ENCODE measurements at regions of chr1 and their contacts with region 1.

Region 1: GRCh38 chr1:179025125-179025974 is at the start of gene FAM20B:
- DNase-seq: peak; percentile 85 to 90 (median 88)
- H3K4me3 ChIP-seq: peak within 1 kb of the TSS; percentile 61 to 77
- H3K4me3 Mint-ChIP-seq: peak within 1 kb of the TSS; percentile 88 to 94 (median 90)
- H3K27ac ChIP-seq: peak within 1 kb of the TSS; percentile 77
- H3K27ac Mint-ChIP-seq: peak within 1 kb of the TSS; percentile 85 to 95 (median 90)
- H3K4me1 ChIP-seq: peaks cover 37% of the 10 kb centered on the region
- H3K4me1 Mint-ChIP-seq: peaks cover 29 to 49% (median 39%) of the 10 kb centered on the region in 4 donors
- H3K27me3 ChIP-seq: no peaks in the 10 kb centered on the region
- H3K27me3 Mint-ChIP-seq: no peaks in the 10 kb centered on the region
- total RNA-seq, gene FAM20B: 29.6 to 31.9 TPM

Region 2: DNA sequence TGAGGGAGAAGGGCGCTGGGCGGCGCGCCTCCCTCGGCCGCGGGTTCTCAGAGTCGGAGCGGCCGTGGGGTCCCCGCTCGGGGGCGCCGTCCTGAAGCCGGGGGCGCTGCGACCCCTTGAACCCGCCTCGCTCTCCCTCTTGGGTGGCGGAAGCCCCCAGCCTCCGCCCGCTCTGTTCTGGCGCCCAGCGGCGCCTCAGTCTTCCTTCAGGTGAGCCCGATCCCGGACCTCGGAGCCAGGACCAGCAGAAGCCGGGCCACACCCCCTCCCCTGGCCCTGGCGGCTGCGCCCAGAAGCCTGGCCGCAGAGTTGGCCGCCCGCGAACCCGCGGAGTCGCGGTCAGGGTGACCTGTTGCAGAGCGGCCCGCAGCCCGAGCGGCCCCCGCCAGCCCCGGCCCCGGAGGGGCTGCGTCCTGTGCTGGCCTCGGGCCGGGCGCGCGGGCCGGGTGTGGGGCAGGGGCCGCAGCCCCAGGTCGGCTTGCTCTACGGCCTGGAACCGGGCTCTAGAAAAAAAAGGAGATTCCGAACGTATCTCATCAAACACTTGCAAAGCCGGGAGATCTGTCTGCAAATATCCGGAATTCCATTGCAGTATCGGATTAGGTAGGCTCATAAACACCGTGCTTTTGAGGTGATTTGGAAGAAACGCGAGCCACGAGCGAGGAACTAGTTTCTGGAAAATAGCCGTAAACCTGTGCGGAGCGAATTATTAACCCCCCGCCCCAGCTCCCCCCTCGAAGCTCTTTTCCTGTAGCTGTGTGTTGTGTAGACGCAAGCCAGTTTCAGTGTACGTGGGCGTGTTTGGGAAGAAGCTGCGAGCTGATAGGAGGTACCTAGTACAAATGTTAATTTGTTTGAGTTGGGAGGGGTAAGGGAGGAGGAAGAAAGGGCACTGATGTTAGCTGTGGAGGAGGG is 299.5 kb before region 1 on chr1:
- CTCF ChIA-PET with region 1: no interaction called
- POLR2A ChIA-PET with region 1: no interaction called
- intact Hi-C with region 1: loop called (anchors 2 kb)
- DNase-seq: peak; percentile 48 to 79 (median 64)
- H3K4me3 ChIP-seq: peak overlapping the region; percentile 45 to 63
- H3K4me3 Mint-ChIP-seq: peak overlapping the region; percentile 74 to 92 (median 86)
- H3K27ac ChIP-seq: peak overlapping the region; percentile 47
- H3K27ac Mint-ChIP-seq: peak overlapping the region; percentile 75 to 91 (median 87)
- H3K4me1 ChIP-seq: peaks cover 14% of the 10 kb centered on the region
- H3K4me1 Mint-ChIP-seq: peaks cover 13 to 27% (median 16%) of the 10 kb centered on the region in 4 donors
- H3K27me3 ChIP-seq: no peaks in the 10 kb centered on the region
- H3K27me3 Mint-ChIP-seq: peaks cover 3 to 9% of the 10 kb centered on the region in 2 donors

Region 3: DNA sequence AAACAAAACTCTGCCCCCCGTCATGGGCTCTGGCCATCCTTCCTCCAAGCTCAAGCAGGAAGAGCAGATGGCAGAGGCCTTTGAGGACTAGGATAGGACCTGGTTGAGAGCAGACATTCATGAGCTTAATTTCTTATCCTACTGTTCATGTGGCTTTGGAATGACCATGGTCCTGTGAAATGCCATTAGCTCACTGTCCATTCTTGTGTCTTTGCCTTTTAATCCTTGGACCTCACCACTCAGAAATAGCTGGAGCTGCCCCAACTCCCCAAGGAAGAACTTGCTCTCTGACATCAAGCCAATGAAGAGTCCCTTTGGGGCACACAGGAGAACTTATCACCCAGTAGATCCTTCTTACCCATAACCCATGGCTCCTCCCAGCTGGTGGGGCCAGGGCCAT is 11.2 kb before region 1 on chr1:
- CTCF ChIA-PET with region 1: no interaction called
- POLR2A ChIA-PET with region 1: no interaction called
- intact Hi-C with region 1: no loop called
- DNase-seq: no peak
- H3K4me3 ChIP-seq: no peak overlapping the region
- H3K4me3 Mint-ChIP-seq: no peak overlapping the region
- H3K27ac ChIP-seq: no peak overlapping the region
- H3K27ac Mint-ChIP-seq: no peak overlapping the region
- H3K4me1 ChIP-seq: peaks cover 4% of the 10 kb centered on the region
- H3K4me1 Mint-ChIP-seq: peaks cover 4 to 9% (median 6%) of the 10 kb centered on the region in 4 donors
- H3K27me3 ChIP-seq: no peaks in the 10 kb centered on the region
- H3K27me3 Mint-ChIP-seq: peaks cover 0 to 1% of the 10 kb centered on the region in 2 donors

Region 4: DNA sequence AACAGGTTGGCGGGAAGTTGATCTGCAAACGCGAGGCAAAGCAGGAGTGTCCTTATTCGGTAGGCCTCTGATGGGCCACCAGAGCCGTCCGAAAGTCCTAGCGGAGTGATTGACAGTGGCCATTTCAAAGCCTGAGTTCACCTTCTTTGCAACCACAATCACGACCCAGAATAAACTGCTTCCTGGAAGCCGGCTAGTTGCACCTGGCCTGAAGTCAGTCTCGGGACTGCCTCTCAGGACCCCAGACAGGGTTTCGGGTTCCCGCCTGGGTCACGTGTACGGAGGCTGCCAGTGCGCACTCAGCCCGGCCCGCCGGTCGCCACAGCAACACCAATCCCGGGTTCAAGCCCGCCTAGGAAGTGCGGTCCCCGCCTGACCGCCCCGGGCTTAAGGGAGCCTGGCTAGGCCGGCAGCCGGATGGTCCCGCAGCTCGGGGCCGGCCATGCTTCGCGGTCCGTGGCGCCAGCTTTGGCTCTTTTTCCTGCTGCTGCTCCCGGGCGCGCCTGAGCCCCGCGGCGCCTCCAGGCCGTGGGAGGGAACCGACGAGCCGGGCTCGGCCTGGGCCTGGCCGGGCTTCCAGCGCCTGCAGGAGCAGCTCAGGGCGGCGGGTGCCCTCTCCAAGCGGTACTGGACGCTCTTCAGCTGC is 56.5 kb after region 1 on chr1 and contains the start of gene TOR3A:
- CTCF ChIA-PET with region 1: interaction called, 6 read pairs
- POLR2A ChIA-PET with region 1: interaction called, 6 read pairs
- intact Hi-C with region 1: loop called (anchors 2 kb)
- DNase-seq: peak; percentile 72 to 80 (median 75)
- H3K4me3 ChIP-seq: peak within 1 kb of the TSS; percentile 57 to 74
- H3K4me3 Mint-ChIP-seq: peak within 1 kb of the TSS; percentile 93 to 98 (median 96)
- H3K27ac ChIP-seq: peak within 1 kb of the TSS; percentile 81
- H3K27ac Mint-ChIP-seq: peak within 1 kb of the TSS; percentile 97 to 98 (median 97)
- H3K4me1 ChIP-seq: peaks cover 23% of the 10 kb centered on the region
- H3K4me1 Mint-ChIP-seq: peaks cover 15 to 37% (median 26%) of the 10 kb centered on the region in 4 donors
- H3K27me3 ChIP-seq: no peaks in the 10 kb centered on the region
- H3K27me3 Mint-ChIP-seq: no peaks in the 10 kb centered on the region
- total RNA-seq, gene TOR3A: 25.4 to 27.3 TPM

Region 5: GRCh38 chr1:179121159-179121938 is 96.0 kb after region 1 on chr1:
- CTCF ChIA-PET with region 1: no interaction called
- POLR2A ChIA-PET with region 1: no interaction called
- intact Hi-C with region 1: no loop called
- DNase-seq: peak; percentile 38 to 47 (median 45)
- H3K4me3 ChIP-seq: no peak overlapping the region
- H3K4me3 Mint-ChIP-seq: peak overlapping the region in 1 of 8 donors; percentile 48
- H3K27ac ChIP-seq: no peak overlapping the region
- H3K27ac Mint-ChIP-seq: peak overlapping the region in 1 of 7 donors; percentile 30
- H3K4me1 ChIP-seq: no peaks in the 10 kb centered on the region
- H3K4me1 Mint-ChIP-seq: peaks cover 0 to 7% (median 0%) of the 10 kb centered on the region in 4 donors
- H3K27me3 ChIP-seq: no peaks in the 10 kb centered on the region
- H3K27me3 Mint-ChIP-seq: no peaks in the 10 kb centered on the region

Region 6: DNA sequence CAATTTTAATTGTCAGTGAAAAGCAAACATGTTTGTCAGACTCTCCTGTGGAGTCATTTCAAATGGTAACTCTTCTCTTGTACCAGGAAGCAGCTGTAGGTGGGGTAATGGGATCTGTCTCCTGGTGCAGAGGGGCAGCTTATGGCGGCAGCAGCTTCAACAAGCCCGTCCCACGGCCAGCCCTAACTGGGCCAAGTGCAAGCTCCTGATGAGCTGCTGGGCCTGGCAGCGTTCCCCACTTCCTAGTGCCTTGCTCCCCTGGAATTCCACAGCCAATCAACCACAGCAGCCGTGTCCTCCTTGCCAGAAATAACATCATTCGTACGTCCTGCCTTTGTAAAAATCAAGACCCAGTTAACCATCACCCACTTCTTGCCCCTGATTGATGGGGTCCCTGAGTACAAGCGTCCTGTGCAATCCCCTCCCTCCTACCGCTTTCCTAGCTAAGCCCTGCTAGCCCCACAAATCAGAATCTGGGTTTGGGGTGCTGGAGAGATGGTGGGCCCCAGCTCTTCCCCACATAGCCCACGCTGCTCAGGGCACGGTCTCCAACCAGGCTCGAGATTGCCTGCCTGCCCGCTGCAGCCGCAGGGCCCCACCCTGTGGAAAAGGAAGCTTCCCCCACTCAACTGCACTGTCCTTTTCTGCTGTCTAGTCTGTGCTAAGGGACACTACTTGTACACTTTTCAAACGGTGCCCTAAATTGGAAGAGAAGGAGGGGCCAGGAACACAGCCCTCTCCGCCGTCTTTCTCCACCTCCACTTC is 791.0 kb after region 1 on chr1:
- CTCF ChIA-PET with region 1: no interaction called
- POLR2A ChIA-PET with region 1: no interaction called
- intact Hi-C with region 1: loop called (anchors 5 kb)
- DNase-seq: no peak
- H3K4me3 ChIP-seq: no peak overlapping the region
- H3K4me3 Mint-ChIP-seq: peak overlapping the region; percentile 92 to 100 (median 96)
- H3K27ac ChIP-seq: no peak overlapping the region
- H3K27ac Mint-ChIP-seq: peak overlapping the region in 6 of 7 donors; percentile 43 to 99 (median 92)
- H3K4me1 ChIP-seq: peaks cover 17% of the 10 kb centered on the region
- H3K4me1 Mint-ChIP-seq: peaks cover 10 to 26% (median 22%) of the 10 kb centered on the region in 4 donors
- H3K27me3 ChIP-seq: no peaks in the 10 kb centered on the region
- H3K27me3 Mint-ChIP-seq: no peaks in the 10 kb centered on the region

Region 7: DNA sequence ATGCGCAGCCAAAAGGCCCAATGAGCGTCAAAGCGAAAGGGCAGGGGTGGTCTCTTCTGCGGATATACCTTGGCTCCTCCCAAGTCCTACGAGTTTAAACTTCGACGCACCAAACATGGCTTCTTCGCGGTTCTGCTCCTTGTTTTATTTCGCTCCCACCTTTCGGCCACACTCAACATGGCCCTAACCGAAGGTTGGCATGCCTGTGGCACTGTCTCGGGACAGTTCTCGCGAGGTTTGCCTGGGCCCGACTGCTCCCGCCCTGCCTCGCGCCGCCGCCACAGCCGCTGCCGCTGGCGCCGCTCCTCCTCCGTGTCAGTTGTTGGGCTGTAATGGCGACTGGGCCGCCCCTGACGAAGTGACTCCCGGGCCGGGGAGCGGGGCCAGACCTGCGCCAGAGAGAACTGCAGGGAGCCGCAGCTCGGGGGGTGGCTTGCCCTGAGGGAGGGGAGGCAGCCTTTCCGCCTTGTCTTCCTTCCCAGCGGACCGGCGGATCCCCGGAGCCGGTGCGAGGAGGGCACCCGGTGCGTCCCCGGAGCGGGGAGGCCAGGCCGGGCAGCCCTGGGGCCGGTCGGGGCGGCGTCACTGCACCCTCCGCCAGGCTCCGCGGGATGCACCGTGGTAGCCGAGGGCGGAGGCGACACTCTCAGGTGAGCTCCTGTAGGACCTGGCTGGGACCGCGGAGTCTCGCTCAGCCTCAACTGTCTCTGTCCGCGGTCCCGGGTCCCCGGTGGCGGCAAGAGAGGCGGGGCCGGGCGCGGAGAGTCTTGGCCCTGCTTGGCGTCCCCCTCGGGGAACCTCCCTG is 929.3 kb after region 1 on chr1 and contains the start of gene CEP350:
- CTCF ChIA-PET with region 1: no interaction called
- POLR2A ChIA-PET with region 1: no interaction called
- intact Hi-C with region 1: loop called (anchors 2 kb)
- DNase-seq: peak; percentile 97 to 99 (median 99)
- H3K4me3 ChIP-seq: peak within 1 kb of the TSS; percentile 68 to 76
- H3K4me3 Mint-ChIP-seq: peak within 1 kb of the TSS; percentile 86 to 99 (median 91)
- H3K27ac ChIP-seq: peak within 1 kb of the TSS; percentile 90
- H3K27ac Mint-ChIP-seq: peak within 1 kb of the TSS; percentile 86 to 98 (median 95)
- H3K4me1 ChIP-seq: peaks cover 50% of the 10 kb centered on the region
- H3K4me1 Mint-ChIP-seq: peaks cover 36 to 70% (median 48%) of the 10 kb centered on the region in 4 donors
- H3K27me3 ChIP-seq: no peaks in the 10 kb centered on the region
- H3K27me3 Mint-ChIP-seq: no peaks in the 10 kb centered on the region
- total RNA-seq, gene CEP350: 86.2 to 99.4 TPM

Measured in CD4-positive, alpha-beta memory T cell (primary cell).